Activated T-helper 2 cell treated with anti-CD3 and anti-CD28 coated beads, Interferon-gamma antibody, Interleukin-2, Interleukin-4, amounts not matched to agents 10 μg/mL and 5 μg/mL and 100 μg/mL, durations not matched to agents 14 hours and 24 hours and 36 hours (primary cell): ENCODE measurements at regions of chr1 and their contacts with region 1.

Region 1: DNA sequence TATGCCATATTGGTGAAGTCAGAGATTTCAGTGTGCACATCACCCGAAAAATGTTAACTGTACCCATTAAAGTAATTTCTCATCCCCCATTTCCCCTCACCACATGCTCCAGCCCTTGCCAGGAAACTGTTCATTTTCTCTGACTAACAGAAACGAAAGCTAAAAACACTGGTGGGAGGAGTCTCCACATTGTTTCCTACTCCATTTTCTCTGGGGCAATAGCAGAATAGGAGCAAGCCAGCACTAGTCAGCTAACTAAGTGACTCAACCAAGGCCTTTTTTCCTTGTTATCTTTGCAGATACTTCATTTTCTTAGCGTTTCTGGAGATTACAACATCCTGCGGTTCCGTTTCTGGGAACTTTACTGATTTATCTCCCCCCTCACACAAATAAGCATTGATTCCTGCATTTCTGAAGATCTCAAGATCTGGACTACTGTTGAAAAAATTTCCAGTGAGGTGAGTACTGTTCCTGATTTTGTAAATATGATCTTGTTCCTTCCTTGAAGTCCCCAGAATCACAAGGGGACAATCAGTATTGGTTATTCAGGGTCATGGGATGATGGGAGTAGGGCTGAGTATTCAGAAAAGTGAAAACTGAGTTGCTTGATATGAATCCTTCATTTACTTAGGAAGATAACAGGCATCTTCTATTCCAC is at the start of gene IFI16:
- DNase-seq: peak; percentile 70
- H3K4me3 Mint-ChIP-seq: peak within 1 kb of the TSS; percentile 96
- H3K27ac Mint-ChIP-seq: peak within 1 kb of the TSS; percentile 99
- H3K4me1 Mint-ChIP-seq: peaks cover 57% of the 10 kb centered on the region
- H3K27me3 Mint-ChIP-seq: no peaks in the 10 kb centered on the region
- total RNA-seq, gene IFI16: 108 and 113 TPM in 2 replicates

Region 2: GRCh38 chr1:158716335-158716734 is 293.5 kb before region 1 on chr1:
- intact Hi-C with region 1: loop called (anchors 5 kb)
- DNase-seq: no peak
- H3K4me3 Mint-ChIP-seq: no peak overlapping the region
- H3K27ac Mint-ChIP-seq: peak overlapping the region; percentile 9
- H3K4me1 Mint-ChIP-seq: peaks cover 15% of the 10 kb centered on the region
- H3K27me3 Mint-ChIP-seq: peaks cover 10% of the 10 kb centered on the region

Region 3: DNA sequence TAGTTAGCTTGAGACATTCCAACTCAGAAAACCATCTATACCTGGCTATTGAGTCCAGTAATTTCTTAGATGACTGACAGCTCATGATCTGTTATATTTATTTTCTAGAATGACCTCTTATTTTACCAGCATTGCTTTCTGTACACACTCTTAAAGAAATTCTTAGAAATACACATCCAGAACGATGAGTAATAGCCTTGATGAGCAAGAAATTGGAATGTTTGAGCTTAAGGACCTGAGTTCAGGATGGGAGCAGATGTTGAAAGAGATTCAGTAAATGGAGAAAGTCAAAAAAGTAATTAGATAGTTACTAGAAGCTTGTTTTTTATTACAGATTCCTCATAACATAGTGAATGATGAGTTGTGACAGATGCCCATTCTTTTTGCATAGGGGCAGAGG is 66.8 kb before region 1 on chr1:
- intact Hi-C with region 1: loop called (anchors 2 kb)
- DNase-seq: no peak
- H3K4me3 Mint-ChIP-seq: no peak overlapping the region
- H3K27ac Mint-ChIP-seq: no peak overlapping the region
- H3K4me1 Mint-ChIP-seq: peaks cover 13% of the 10 kb centered on the region
- H3K27me3 Mint-ChIP-seq: no peaks in the 10 kb centered on the region

Region 4: DNA sequence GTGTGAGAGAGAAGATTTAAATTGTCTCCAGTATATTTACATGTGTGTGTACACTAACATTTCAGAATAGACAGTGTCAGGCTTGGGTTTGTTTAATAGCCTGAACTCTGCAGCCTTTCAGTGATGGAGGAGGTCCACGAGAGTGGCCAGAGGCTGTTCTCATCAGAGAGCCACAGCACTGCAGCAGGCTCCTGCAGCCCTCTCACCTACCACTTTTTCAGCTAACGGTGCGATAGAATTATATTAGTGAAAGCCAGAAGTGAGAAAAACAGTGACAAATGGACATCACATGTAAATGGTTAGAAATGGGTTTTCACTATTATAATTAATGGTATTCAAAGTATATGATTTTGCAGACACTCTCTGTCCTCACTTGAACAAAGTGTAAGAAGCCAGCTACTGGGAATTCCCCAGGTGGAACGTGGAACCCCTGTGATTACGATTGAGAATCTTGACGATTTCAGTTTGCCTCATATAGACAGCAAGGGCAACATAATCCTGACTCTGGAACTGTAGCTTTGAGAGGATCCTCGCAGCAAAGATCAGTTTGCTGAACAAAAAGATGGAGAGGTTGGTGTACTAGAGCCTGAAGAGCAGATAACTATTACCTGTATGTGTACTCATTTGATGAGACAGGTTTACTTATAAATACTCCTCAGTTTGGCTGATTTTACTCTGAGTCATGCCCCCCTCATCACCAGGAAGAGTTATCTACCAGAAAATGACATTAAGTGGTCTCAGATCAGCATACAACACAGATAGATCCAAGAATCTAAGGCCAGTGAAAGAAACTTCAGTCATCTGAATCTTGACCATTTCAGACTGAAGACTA is 31.3 kb after region 1 on chr1:
- intact Hi-C with region 1: loop called (anchors 1 kb)
- DNase-seq: no peak
- H3K4me3 Mint-ChIP-seq: no peak overlapping the region
- H3K27ac Mint-ChIP-seq: peak overlapping the region; percentile 39
- H3K4me1 Mint-ChIP-seq: peaks cover 29% of the 10 kb centered on the region
- H3K27me3 Mint-ChIP-seq: no peaks in the 10 kb centered on the region

Region 5: GRCh38 chr1:159483501-159483900 is 473.7 kb after region 1 on chr1:
- intact Hi-C with region 1: no loop called
- DNase-seq: no peak
- H3K4me3 Mint-ChIP-seq: no peak overlapping the region
- H3K27ac Mint-ChIP-seq: no peak overlapping the region
- H3K4me1 Mint-ChIP-seq: no peaks in the 10 kb centered on the region
- H3K27me3 Mint-ChIP-seq: no peaks in the 10 kb centered on the region

Region 6: GRCh38 chr1:159924981-159925712 is 915.3 kb after region 1 on chr1 and contains the start of gene TAGLN2:
- intact Hi-C with region 1: loop called (anchors 5 kb)
- DNase-seq: peak; percentile 86
- H3K4me3 Mint-ChIP-seq: peak within 1 kb of the TSS; percentile 95
- H3K27ac Mint-ChIP-seq: peak within 1 kb of the TSS; percentile 98
- H3K4me1 Mint-ChIP-seq: peaks cover 36% of the 10 kb centered on the region
- H3K27me3 Mint-ChIP-seq: no peaks in the 10 kb centered on the region
- total RNA-seq, gene TAGLN2: 558 and 578 TPM in 2 replicates